Natural killer cell (primary cell): ENCODE measurements at regions of chr5 and their contacts with region 1.

Region 1: GRCh38 chr5:136080483-136081216 is 51.9 kb downstream of the TGFBI start:
- DNase-seq: peak; percentile 47 to 69
- ATAC-seq: peak; percentile 77 to 96 (median 92)
- H3K4me3 ChIP-seq: peak overlapping the region; percentile 2
- H3K4me3 Mint-ChIP-seq: peak overlapping the region; percentile 67
- H3K27ac ChIP-seq: no peak overlapping the region
- H3K27ac Mint-ChIP-seq: peak overlapping the region in 1 of 2 donors; percentile 59
- H3K4me1 ChIP-seq: peaks cover 16% of the 10 kb centered on the region
- H3K4me1 Mint-ChIP-seq: peaks cover 0 to 12% of the 10 kb centered on the region in 2 donors
- H3K27me3 ChIP-seq: peaks cover 7% of the 10 kb centered on the region
- H3K27me3 Mint-ChIP-seq: peaks cover 32 to 39% of the 10 kb centered on the region in 2 donors
- CTCF ChIP-seq: no peak

Region 2: DNA sequence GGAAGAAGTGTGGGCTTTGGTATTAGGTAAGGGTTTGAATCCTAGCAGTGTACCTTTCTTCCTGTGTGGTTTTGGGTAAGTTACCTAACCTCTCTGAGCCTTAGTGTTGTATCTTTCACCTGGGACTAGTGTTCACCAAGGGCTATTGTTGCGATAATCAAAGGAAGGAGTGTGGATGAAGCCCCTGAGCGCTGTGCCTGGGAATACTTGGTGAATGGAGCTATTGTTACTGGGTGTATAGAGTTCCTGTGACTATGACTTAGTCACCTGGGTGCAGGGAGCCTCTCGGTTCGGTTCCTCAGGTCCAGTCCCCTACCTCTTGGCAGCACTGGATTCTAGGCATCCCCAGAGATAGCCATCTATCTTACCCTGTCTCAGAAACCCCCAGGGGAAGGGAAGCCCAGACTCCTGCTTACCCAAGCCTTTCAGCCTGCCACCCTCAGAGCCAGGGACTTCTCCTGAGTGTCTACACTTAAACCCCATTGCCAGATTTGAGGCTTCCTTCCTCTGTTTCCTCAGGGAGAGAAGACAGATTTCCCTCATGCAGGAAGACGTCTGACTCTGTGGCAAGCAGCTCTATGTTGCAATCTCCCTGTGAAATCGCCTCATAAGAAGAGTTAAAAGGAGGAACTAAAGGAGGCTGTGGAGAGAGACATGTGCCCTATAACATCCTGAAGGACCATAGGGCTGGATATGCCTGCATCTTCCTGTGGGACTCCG is 865.6 kb before region 1 on chr5:
- intact Hi-C with region 1: no loop called
- DNase-seq: no peak
- ATAC-seq: no peak
- H3K4me3 ChIP-seq: no peak overlapping the region
- H3K4me3 Mint-ChIP-seq: no peak overlapping the region
- H3K27ac ChIP-seq: no peak overlapping the region
- H3K27ac Mint-ChIP-seq: no peak overlapping the region
- H3K4me1 ChIP-seq: no peaks in the 10 kb centered on the region
- H3K4me1 Mint-ChIP-seq: no peaks in the 10 kb centered on the region
- H3K27me3 ChIP-seq: no peaks in the 10 kb centered on the region
- H3K27me3 Mint-ChIP-seq: peaks cover 6 to 7% of the 10 kb centered on the region in 2 donors
- CTCF ChIP-seq: no peak

Region 3: GRCh38 chr5:135977375-135977928 is 103.2 kb before region 1 on chr5:
- intact Hi-C with region 1: loop called (anchors 10 kb)
- DNase-seq: peak; percentile 36 to 61
- ATAC-seq: peak; percentile 63 to 78 (median 68)
- H3K4me3 ChIP-seq: no peak overlapping the region
- H3K4me3 Mint-ChIP-seq: no peak overlapping the region
- H3K27ac ChIP-seq: no peak overlapping the region
- H3K27ac Mint-ChIP-seq: no peak overlapping the region
- H3K4me1 ChIP-seq: no peaks in the 10 kb centered on the region
- H3K4me1 Mint-ChIP-seq: no peaks in the 10 kb centered on the region
- H3K27me3 ChIP-seq: peaks cover 7% of the 10 kb centered on the region
- H3K27me3 Mint-ChIP-seq: peaks cover 27 to 61% of the 10 kb centered on the region in 2 donors
- CTCF ChIP-seq: peak; percentile 38